MCF 10A (cell line): ENCODE measurements at regions of chr6 and their contacts with region 1.

Region 1: DNA sequence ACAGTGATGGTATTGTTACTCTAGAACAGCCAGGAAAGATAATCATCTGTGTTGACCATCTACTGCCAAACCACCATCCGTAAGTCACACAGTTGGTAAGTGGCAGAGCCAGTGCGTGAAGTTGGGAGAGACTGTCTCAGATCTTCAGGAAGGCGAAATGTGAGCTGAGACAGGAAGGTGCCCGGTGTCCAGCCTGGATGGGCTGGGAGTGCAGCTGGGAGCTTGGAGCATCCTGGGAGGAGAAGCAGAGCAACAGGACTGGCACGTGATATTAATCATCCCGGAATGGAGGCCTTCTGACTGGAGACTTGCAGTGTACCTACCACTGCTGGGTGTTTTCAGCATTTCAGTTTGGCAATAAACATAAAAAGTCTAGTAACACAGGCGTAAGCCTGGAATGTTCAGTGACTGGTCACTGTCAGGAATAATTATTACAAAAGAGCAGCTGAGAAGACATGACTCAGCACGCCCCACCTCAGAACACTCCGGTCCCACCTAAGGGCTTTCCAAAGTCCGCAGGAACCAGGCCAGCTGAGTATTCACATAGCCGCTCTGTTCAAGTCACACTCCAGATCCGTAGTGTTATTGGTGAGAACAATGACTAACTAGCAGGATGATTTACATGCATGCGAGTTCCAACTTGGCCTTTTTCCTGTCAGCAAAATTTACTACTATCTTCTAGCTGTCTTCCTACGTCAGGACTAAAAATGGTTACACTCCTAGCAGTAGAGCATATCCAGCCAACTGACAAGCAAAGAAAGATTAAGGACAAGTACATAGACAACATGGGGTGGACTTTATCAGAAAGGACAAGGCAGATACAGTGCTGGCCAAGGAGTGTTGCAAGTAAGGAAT is 45.1 kb upstream of the PNRC1 start:
- DNase-seq: peak; percentile 100
- H3K4me3 Mint-ChIP-seq: peak overlapping the region; percentile 47
- H3K27ac Mint-ChIP-seq: peak overlapping the region; percentile 95
- H3K4me1 Mint-ChIP-seq: peaks cover 21% of the 10 kb centered on the region
- H3K27me3 Mint-ChIP-seq: no peaks in the 10 kb centered on the region
- CTCF ChIP-seq: no peak

Region 2: GRCh38 chr6:88975369-88975768 is 60.1 kb before region 1 on chr6:
- CTCF ChIA-PET with region 1: no interaction called
- POLR2A ChIA-PET with region 1: no interaction called
- intact Hi-C with region 1: no loop called
- DNase-seq: no peak
- H3K4me3 Mint-ChIP-seq: no peak overlapping the region
- H3K27ac Mint-ChIP-seq: no peak overlapping the region
- H3K4me1 Mint-ChIP-seq: no peaks in the 10 kb centered on the region
- H3K27me3 Mint-ChIP-seq: no peaks in the 10 kb centered on the region
- CTCF ChIP-seq: no peak

Region 3: DNA sequence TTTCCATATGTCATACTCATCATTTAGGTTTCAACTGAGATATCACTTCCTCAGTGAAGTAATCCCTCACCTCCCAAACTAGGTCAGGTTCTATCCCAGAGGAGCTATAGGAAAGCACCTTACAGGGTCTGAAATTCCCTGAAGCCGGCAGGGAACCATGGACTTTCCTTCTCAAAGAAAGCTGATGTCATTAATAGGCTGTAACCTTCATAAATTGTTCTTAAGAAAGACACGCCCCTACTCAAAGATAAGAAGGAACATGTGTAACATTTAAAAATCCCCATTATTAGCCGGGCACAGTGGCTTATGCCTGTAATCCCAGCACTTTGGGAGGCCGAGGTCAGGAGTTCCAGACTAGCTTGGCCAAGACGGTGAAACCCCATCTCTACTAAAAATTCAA is 22.0 kb before region 1 on chr6:
- CTCF ChIA-PET with region 1: interaction called, 3 read pairs
- POLR2A ChIA-PET with region 1: interaction called, 20 read pairs
- intact Hi-C with region 1: no loop called
- DNase-seq: no peak
- H3K4me3 Mint-ChIP-seq: no peak overlapping the region
- H3K27ac Mint-ChIP-seq: no peak overlapping the region
- H3K4me1 Mint-ChIP-seq: no peaks in the 10 kb centered on the region
- H3K27me3 Mint-ChIP-seq: no peaks in the 10 kb centered on the region
- CTCF ChIP-seq: no peak

Region 4: DNA sequence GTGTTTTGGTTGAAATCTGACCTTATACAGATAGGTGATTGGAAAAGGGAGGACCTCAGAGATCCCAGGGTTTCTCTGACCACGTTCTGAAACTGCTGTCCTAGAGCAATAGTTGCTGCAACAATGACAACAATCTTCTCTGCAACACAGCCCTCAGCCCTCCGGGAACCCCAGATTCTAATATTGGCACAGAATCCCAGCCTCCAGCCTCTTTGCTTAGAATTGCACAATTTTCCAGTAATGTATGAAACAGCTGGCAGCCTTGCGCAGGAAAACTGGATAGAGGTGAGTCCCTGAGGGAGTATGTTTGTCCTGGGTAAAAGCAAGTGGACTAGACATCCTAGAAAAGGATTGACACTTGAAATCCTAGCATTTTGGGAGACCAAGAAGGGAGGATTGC is 14.7 kb after region 1 on chr6:
- CTCF ChIA-PET with region 1: interaction called, 4 read pairs
- POLR2A ChIA-PET with region 1: interaction called, 97 read pairs
- intact Hi-C with region 1: loop called (anchors 1 kb)
- DNase-seq: peak; percentile 95
- H3K4me3 Mint-ChIP-seq: peak overlapping the region; percentile 45
- H3K27ac Mint-ChIP-seq: peak overlapping the region; percentile 77
- H3K4me1 Mint-ChIP-seq: peaks cover 28% of the 10 kb centered on the region
- H3K27me3 Mint-ChIP-seq: no peaks in the 10 kb centered on the region
- CTCF ChIP-seq: no peak

Region 5: GRCh38 chr6:89073014-89073620 is 37.6 kb after region 1 on chr6:
- CTCF ChIA-PET with region 1: interaction called, 25 read pairs
- POLR2A ChIA-PET with region 1: interaction called, 573 read pairs
- intact Hi-C with region 1: no loop called
- DNase-seq: no peak
- H3K4me3 Mint-ChIP-seq: no peak overlapping the region
- H3K27ac Mint-ChIP-seq: no peak overlapping the region
- H3K4me1 Mint-ChIP-seq: peaks cover under 1% of the 10 kb centered on the region
- H3K27me3 Mint-ChIP-seq: no peaks in the 10 kb centered on the region
- CTCF ChIP-seq: no peak

Region 6: DNA sequence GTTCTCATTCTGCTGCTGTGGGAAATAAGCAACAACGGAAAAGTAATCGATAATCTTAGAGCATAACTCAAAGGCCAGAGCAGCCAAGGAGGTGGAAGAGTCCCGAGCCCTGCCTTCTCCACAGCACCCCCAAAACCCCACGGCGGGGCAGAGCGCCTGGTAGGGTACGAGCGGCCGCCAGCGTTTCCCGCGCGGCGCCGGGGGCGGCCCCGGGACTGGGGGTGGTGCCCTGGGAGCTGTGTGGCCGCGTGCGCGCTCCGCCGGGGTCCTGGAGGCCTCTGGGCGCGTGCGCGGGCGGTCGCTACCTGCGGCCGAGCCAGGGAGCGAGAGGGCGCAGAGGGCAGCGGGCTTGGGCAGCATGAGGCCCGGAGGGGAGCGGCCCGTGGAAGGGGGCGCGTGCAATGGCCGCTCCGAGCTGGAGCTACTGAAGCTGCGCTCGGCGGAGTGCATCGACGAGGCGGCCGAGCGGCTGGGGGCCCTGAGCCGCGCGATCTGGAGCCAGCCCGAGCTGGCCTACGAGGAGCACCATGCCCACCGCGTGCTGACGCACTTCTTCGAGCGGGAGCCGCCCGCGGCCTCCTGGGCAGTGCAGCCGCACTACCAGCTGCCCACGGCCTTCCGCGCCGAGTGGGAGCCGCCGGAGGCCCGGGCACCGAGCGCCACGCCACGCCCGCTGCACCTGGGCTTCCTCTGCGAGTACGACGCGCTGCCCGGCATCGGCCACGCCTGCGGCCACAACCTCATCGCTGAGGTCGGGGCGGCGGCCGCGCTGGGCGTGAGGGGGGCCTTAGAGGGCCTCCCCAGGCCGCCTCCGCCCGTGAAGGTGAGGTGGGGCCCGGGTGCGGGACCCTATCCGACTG is 110.5 kb after region 1 on chr6 and contains the start of gene PM20D2:
- CTCF ChIA-PET with region 1: no interaction called
- POLR2A ChIA-PET with region 1: interaction called, 36 read pairs
- intact Hi-C with region 1: loop called (anchors 1 kb)
- DNase-seq: peak; percentile 69
- H3K4me3 Mint-ChIP-seq: peak within 1 kb of the TSS; percentile 80
- H3K27ac Mint-ChIP-seq: peak within 1 kb of the TSS; percentile 87
- H3K4me1 Mint-ChIP-seq: peaks cover 22% of the 10 kb centered on the region
- H3K27me3 Mint-ChIP-seq: no peaks in the 10 kb centered on the region
- CTCF ChIP-seq: no peak
- total RNA-seq, gene PM20D2: 9.9 and 11.9 TPM in 2 replicates